Ascending aorta (tissue), 2 donors: ENCODE measurements at regions of chr1 and their contacts with region 1.

Region 1: GRCh38 chr1:156583821-156584622 is 4.5 kb downstream of the TTC24 start:
- DNase-seq: peak in 1 of 2 donors; percentile 89
- H3K4me3 ChIP-seq: no peak overlapping the region
- H3K27ac ChIP-seq: no peak overlapping the region
- H3K4me1 ChIP-seq: peaks cover 0 to 3% of the 10 kb centered on the region in 2 donors
- H3K27me3 ChIP-seq: no peaks in the 10 kb centered on the region
- CTCF ChIP-seq: peak; percentile 82 to 95 (median 88)

Region 2: GRCh38 chr1:156414461-156415064 is 169.5 kb before region 1 on chr1:
- intact Hi-C with region 1: no loop called
- DNase-seq: no peak
- H3K4me3 ChIP-seq: no peak overlapping the region
- H3K27ac ChIP-seq: no peak overlapping the region
- H3K4me1 ChIP-seq: no peaks in the 10 kb centered on the region
- H3K27me3 ChIP-seq: peaks cover 9% of the 10 kb centered on the region
- CTCF ChIP-seq: no peak

Region 3: DNA sequence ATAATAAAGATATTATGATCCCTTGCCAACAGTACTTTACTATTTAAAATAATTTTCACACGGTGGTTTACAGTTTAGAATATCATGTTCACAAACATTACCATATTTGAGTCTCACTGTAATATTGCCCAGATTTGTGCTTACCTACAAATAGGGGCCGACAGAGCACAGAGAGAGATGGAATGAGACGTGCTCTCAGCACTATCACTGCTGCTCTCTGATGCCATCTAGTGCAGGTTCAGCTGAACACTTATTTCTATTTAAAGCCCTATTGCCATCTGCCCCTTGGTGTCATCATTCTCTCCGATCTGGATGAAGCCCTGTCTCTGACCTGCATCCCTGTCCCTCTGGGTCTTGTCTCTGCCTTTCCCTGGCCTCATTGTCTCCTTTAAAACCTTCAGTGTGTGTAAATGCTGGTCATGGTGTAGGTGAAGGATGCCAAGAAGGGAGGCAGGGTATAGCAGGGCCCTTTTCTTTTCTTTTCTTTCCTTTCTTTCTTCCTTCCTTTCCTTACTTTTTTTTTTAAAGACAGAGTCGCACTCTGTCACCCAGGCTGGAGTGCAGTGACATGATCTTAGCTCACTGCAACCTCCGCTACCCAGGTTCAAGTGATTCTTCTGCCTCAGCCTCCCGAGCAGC is 24.1 kb after region 1 on chr1:
- intact Hi-C with region 1: loop called (anchors 1 kb)
- DNase-seq: no peak
- H3K4me3 ChIP-seq: peak overlapping the region in 1 of 2 donors; percentile 15
- H3K27ac ChIP-seq: no peak overlapping the region
- H3K4me1 ChIP-seq: no peaks in the 10 kb centered on the region
- H3K27me3 ChIP-seq: no peaks in the 10 kb centered on the region
- CTCF ChIP-seq: peak; percentile 80 to 86 (median 82)